Endothelial cell of umbilical vein (primary cell): ENCODE measurements at regions of chr4 and their contacts with region 1.

Region 1: GRCh38 chr4:70687821-70688794 is at the start of gene UTP3:
- DNase-seq: peak; percentile 98
- H3K4me3 ChIP-seq: peak within 1 kb of the TSS; percentile 34 to 72 (median 62)
- H3K27ac ChIP-seq: peak within 1 kb of the TSS; percentile 36
- H3K4me1 ChIP-seq: peaks cover 22% of the 10 kb centered on the region
- H3K27me3 ChIP-seq: no peaks in the 10 kb centered on the region
- CTCF ChIP-seq: peak; percentile 96 to 99
- POLR2A ChIP-seq: peak; percentile 83
- total RNA-seq, gene UTP3: 32.8 and 34.7 TPM in 2 replicates

Region 2: GRCh38 chr4:70839589-70840093 is 151.5 kb after region 1 on chr4 and contains the start of gene GRSF1:
- CTCF ChIA-PET with region 1: interaction called, 3 read pairs
- POLR2A ChIA-PET with region 1: interaction called, 9 read pairs
- dilution Hi-C with region 1: no loop called
- intact Hi-C with region 1: loop called (anchors 1 kb)
- DNase-seq: peak; percentile 91
- H3K4me3 ChIP-seq: peak within 1 kb of the TSS; percentile 54 to 81 (median 80)
- H3K27ac ChIP-seq: peak within 1 kb of the TSS; percentile 60
- H3K4me1 ChIP-seq: peaks cover 2% of the 10 kb centered on the region
- H3K27me3 ChIP-seq: no peaks in the 10 kb centered on the region
- CTCF ChIP-seq: no peak
- POLR2A ChIP-seq: peak; percentile 87
- total RNA-seq, gene GRSF1: 70.7 and 71.6 TPM in 2 replicates

Region 3: GRCh38 chr4:70901984-70902576 is 214.0 kb after region 1 on chr4 and contains the start of gene MOB1B:
- CTCF ChIA-PET with region 1: no interaction called
- POLR2A ChIA-PET with region 1: no interaction called
- dilution Hi-C with region 1: no loop called
- intact Hi-C with region 1: loop called (anchors 1 kb)
- DNase-seq: peak; percentile 88
- H3K4me3 ChIP-seq: peak within 1 kb of the TSS; percentile 64 to 99 (median 96)
- H3K27ac ChIP-seq: peak within 1 kb of the TSS; percentile 71
- H3K4me1 ChIP-seq: peaks cover 14% of the 10 kb centered on the region
- H3K27me3 ChIP-seq: no peaks in the 10 kb centered on the region
- CTCF ChIP-seq: peak in 1 of 2 donors; percentile 24
- POLR2A ChIP-seq: peak; percentile 83
- total RNA-seq, gene MOB1B: 23.9 and 25.9 TPM in 2 replicates